ENCODE measurements at regions of chr1 and their contacts with region 1.

Region 1: GRCh38 chr1:94061513-94062443 is 59.2 kb downstream of the ABCA4 start:
- DNase-seq: peak; percentile 67
- ATAC-seq: peak; percentile 94
- H3K4me3 ChIP-seq: no peak overlapping the region
- H3K27ac ChIP-seq: no peak overlapping the region
- H3K4me1 ChIP-seq: peaks cover 18 to 36% of the 10 kb centered on the region in 2 experiments
- H3K27me3 ChIP-seq: no peaks in the 10 kb centered on the region
- CTCF ChIP-seq: peak; percentile 90 to 96 (median 92)
- POLR2A ChIP-seq: no peak
- RAD21 ChIP-seq: peak; percentile 99

Region 2: GRCh38 chr1:93296555-93297154 is 765.1 kb before region 1 on chr1:
- CTCF ChIA-PET with region 1: no interaction called
- POLR2A ChIA-PET with region 1: no interaction called
- RAD21 ChIA-PET with region 1: no interaction called
- intact Hi-C with region 1: no loop called
- DNase-seq: no peak
- ATAC-seq: no peak
- H3K4me3 ChIP-seq: no peak overlapping the region
- H3K27ac ChIP-seq: no peak overlapping the region
- H3K4me1 ChIP-seq: no peaks in the 10 kb centered on the region
- H3K27me3 ChIP-seq: no peaks in the 10 kb centered on the region
- CTCF ChIP-seq: no peak
- POLR2A ChIP-seq: no peak
- RAD21 ChIP-seq: no peak

Region 3: DNA sequence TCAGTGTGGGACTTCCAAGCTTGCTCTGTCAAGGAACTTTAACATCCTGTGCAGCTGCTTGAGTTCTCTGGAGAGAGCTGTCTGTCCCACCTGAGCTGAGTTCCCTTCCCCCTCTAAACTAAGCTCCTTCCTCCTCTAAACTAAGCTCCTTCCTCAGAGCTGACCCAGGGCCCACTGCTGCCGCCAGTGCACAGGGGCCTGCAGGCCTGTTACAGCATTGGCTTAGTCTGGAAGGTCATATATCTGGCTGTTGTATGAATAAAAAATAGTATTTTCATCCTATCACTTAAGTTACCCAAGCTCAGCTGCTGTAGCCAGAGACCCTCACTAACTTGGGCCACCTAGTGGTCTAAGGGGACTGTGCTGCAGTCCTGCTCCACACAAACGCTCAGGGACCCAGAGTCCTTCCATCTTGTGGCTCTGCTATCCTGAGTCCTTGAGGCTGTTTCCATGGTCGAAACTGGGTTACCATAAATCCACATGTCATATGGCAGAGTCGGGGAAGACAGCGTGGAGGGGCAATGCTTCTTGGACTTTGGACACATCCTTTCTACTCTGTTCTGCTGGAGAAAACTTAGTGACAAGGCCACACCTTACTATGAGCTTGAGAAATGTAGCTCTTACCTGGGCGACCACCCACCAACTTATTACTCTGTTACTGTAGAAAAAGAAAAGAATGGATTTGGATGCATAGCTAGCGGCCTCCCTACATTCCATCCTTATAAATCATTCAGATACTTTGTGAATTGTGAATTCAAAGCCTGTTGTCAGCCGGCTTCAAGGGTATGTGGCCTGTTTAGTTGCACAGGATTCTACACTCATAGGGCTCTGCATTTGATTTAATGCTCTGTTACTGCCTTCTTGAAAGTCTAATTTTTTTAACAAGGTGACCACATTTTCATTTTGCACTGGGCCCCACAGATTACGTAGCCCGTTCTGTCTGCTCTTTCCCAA is 81.2 kb before region 1 on chr1:
- CTCF ChIA-PET with region 1: no interaction called
- POLR2A ChIA-PET with region 1: no interaction called
- RAD21 ChIA-PET with region 1: no interaction called
- intact Hi-C with region 1: no loop called
- DNase-seq: no peak
- ATAC-seq: peak; percentile 90
- H3K4me3 ChIP-seq: no peak overlapping the region
- H3K27ac ChIP-seq: no peak overlapping the region
- H3K4me1 ChIP-seq: no peaks in the 10 kb centered on the region
- H3K27me3 ChIP-seq: no peaks in the 10 kb centered on the region
- CTCF ChIP-seq: peak; percentile 4 to 55 (median 54); a peak in 4 of 6 replicates
- POLR2A ChIP-seq: no peak
- RAD21 ChIP-seq: no peak

Region 4: GRCh38 chr1:94039514-94039870 is 22.3 kb before region 1 on chr1:
- CTCF ChIA-PET with region 1: interaction called, 20 read pairs
- POLR2A ChIA-PET with region 1: interaction called, 4 read pairs
- RAD21 ChIA-PET with region 1: interaction called in 1 of 2 experiments, 4 read pairs
- intact Hi-C with region 1: no loop called
- DNase-seq: peak; percentile 56
- ATAC-seq: peak; percentile 89
- H3K4me3 ChIP-seq: no peak overlapping the region
- H3K27ac ChIP-seq: no peak overlapping the region
- H3K4me1 ChIP-seq: peaks cover 2 to 12% of the 10 kb centered on the region in 2 experiments; a peak in 3 of 4 replicates
- H3K27me3 ChIP-seq: no peaks in the 10 kb centered on the region
- CTCF ChIP-seq: peak; percentile 87 to 99 (median 97)
- POLR2A ChIP-seq: no peak
- RAD21 ChIP-seq: peak; percentile 82

Region 5: GRCh38 chr1:94045465-94046056 is 16.2 kb before region 1 on chr1:
- CTCF ChIA-PET with region 1: interaction called, 20 read pairs
- POLR2A ChIA-PET with region 1: interaction called, 4 read pairs
- RAD21 ChIA-PET with region 1: interaction called in 1 of 2 experiments, 6 read pairs
- intact Hi-C with region 1: no loop called
- DNase-seq: peak; percentile 91
- ATAC-seq: peak; percentile 93
- H3K4me3 ChIP-seq: no peak overlapping the region
- H3K27ac ChIP-seq: peak overlapping the region; percentile 27; the same call in 1 of the 2 replicates
- H3K4me1 ChIP-seq: peaks cover 16 to 20% of the 10 kb centered on the region in 2 experiments; a peak in 3 of 4 replicates
- H3K27me3 ChIP-seq: no peaks in the 10 kb centered on the region
- CTCF ChIP-seq: peak; percentile 71 to 98 (median 83)
- POLR2A ChIP-seq: no peak
- RAD21 ChIP-seq: peak; percentile 86

Region 6: GRCh38 chr1:94087193-94087592 is 25.4 kb after region 1 on chr1:
- CTCF ChIA-PET with region 1: no interaction called
- POLR2A ChIA-PET with region 1: no interaction called
- RAD21 ChIA-PET with region 1: no interaction called
- intact Hi-C with region 1: no loop called
- DNase-seq: no peak
- ATAC-seq: no peak
- H3K4me3 ChIP-seq: no peak overlapping the region
- H3K27ac ChIP-seq: no peak overlapping the region
- H3K4me1 ChIP-seq: peaks cover 0 to under 1% of the 10 kb centered on the region in 2 experiments; a peak in 1 of 4 replicates
- H3K27me3 ChIP-seq: no peaks in the 10 kb centered on the region; the same call in 1 of the 2 replicates
- CTCF ChIP-seq: no peak
- POLR2A ChIP-seq: no peak
- RAD21 ChIP-seq: no peak

Region 7: GRCh38 chr1:94180650-94181049 is 118.9 kb after region 1 on chr1:
- CTCF ChIA-PET with region 1: interaction called, 3 read pairs
- POLR2A ChIA-PET with region 1: no interaction called
- RAD21 ChIA-PET with region 1: no interaction called
- intact Hi-C with region 1: loop called (anchors 10 kb)
- DNase-seq: no peak
- ATAC-seq: no peak
- H3K4me3 ChIP-seq: no peak overlapping the region
- H3K27ac ChIP-seq: no peak overlapping the region; the same call in 1 of the 2 replicates
- H3K4me1 ChIP-seq: peaks cover 0 to 4% of the 10 kb centered on the region in 2 experiments; a peak in 2 of 4 replicates
- H3K27me3 ChIP-seq: no peaks in the 10 kb centered on the region
- CTCF ChIP-seq: no peak
- POLR2A ChIP-seq: no peak
- RAD21 ChIP-seq: no peak

Measured in HCT116 (cell line).